Colonic mucosa (tissue), 4 donors: ENCODE measurements at regions of chr2 and their contacts with region 1.

Region 1: DNA sequence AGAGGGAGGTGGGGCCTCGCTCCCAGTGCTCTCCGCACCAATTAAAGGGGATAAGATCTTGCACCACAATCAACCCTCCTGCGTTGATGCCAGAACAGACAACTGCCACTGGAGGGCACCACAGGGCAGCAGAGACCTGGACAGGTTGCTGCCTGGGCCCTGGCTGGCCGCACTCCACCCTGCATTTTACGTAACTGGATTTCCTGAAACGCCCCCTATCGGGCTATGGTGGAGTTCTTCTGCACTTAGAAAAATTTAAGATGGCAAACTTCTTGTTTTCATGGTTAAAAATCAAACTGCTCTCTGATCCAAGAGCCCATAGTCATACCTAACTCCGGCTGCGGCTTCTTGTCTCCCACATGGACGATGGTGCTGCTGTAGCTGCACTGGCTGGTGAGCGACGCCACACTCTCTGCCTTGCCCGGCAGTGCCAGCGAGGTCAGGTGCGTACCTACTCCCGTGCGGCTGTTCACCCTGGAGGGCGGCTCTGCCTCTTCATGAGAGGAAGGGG is 16.8 kb upstream of the HES6 start:
- DNase-seq: peak; percentile 92
- H3K4me3 ChIP-seq: no peak overlapping the region
- H3K27ac ChIP-seq: no peak overlapping the region
- H3K4me1 ChIP-seq: no peaks in the 10 kb centered on the region
- H3K27me3 ChIP-seq: no peaks in the 10 kb centered on the region
- CTCF ChIP-seq: peak; percentile 95

Region 2: GRCh38 chr2:237923481-237924163 is 333.0 kb before region 1 on chr2:
- intact Hi-C with region 1: no loop called
- DNase-seq: peak; percentile 67
- H3K4me3 ChIP-seq: no peak overlapping the region
- H3K27ac ChIP-seq: no peak overlapping the region
- H3K4me1 ChIP-seq: no peaks in the 10 kb centered on the region
- H3K27me3 ChIP-seq: no peaks in the 10 kb centered on the region
- CTCF ChIP-seq: peak; percentile 94

Region 3: GRCh38 chr2:238139196-238140039 is 117.2 kb before region 1 on chr2:
- intact Hi-C with region 1: no loop called
- DNase-seq: no peak
- H3K4me3 ChIP-seq: no peak overlapping the region
- H3K27ac ChIP-seq: no peak overlapping the region
- H3K4me1 ChIP-seq: peaks cover 7% of the 10 kb centered on the region
- H3K27me3 ChIP-seq: no peaks in the 10 kb centered on the region
- CTCF ChIP-seq: peak; percentile 63

Region 4: DNA sequence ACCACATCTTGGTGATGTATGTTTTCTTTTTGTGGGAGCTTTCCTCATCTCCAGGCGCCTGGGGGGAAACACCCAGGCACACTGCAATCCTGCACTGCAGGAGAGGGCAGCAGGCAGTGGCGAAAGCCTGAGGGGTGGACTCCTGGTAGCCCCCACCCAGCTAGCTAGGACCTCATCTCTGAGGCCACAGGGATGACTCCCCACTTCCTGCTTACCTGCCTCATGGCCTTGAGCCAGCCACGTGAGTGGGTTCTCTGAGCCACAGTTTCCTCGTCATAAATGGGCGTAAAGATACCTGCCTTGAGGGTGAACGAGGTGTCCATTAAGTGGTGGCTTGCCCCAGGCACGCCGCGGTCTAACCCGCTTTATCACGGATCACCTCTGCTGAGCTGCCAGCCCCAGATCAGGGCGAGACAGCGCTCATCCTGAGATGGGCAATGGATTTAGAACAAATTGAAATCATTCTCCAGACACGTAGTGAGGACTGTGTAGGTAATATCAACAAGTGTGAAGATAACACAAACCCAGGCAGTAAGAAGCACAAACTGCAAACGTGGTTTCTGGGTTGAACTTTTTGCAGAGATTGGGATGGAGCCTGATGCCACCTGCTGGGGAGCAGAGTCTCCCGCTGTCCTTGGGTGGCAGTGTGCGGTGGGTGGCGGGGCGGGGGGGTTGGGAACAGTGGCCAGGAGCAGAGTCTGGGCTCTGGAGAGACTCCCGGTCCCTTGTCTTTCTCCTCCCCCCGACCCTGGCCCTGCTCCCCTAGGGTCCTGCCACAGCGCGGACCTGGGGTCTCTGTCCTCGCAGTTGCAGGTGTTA is 83.0 kb after region 1 on chr2:
- intact Hi-C with region 1: loop called (anchors 5 kb)
- DNase-seq: peak; percentile 34
- H3K4me3 ChIP-seq: no peak overlapping the region
- H3K27ac ChIP-seq: no peak overlapping the region
- H3K4me1 ChIP-seq: no peaks in the 10 kb centered on the region
- H3K27me3 ChIP-seq: no peaks in the 10 kb centered on the region
- CTCF ChIP-seq: no peak

Region 5: GRCh38 chr2:238420878-238421694 is 164.4 kb after region 1 on chr2:
- intact Hi-C with region 1: no loop called
- DNase-seq: no peak
- H3K4me3 ChIP-seq: no peak overlapping the region
- H3K27ac ChIP-seq: no peak overlapping the region
- H3K4me1 ChIP-seq: no peaks in the 10 kb centered on the region
- H3K27me3 ChIP-seq: no peaks in the 10 kb centered on the region
- CTCF ChIP-seq: no peak

Region 6: DNA sequence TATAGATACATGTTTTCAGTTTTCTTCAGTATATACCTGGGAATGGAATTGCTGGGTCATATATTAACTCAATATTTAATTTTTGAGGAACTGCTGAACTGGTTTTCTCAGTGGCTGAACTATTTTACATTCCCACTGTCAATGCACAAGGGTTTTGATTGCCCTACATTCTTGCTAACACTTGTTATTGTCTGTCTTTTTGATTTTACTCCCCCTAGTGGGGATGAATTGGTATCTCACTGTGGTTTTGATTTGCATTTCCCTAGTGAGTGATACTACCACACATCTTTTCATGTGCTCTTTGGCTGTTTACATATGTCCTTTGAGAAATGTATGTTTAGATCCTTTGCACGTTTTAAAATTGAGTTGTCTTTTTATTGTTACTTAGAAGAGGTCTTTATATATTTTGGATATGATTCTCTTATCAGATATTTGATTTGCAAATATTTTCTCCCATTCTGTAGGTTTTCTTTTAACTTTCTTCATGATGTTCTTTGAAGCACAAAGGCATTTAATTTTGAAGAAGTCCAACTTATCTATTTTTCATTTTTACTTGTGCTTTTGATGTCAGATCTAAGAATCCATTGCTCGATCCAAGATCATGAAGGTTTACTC is 206.2 kb after region 1 on chr2:
- intact Hi-C with region 1: loop called (anchors 5 kb)
- DNase-seq: no peak
- H3K4me3 ChIP-seq: no peak overlapping the region
- H3K27ac ChIP-seq: no peak overlapping the region
- H3K4me1 ChIP-seq: no peaks in the 10 kb centered on the region
- H3K27me3 ChIP-seq: no peaks in the 10 kb centered on the region
- CTCF ChIP-seq: peak; percentile 67